ENCODE measurements at regions of chr13 and their contacts with region 1.

Region 1: GRCh38 chr13:26946684-26947343 is 186.2 kb upstream of the GPR12 start:
- DNase-seq: peak; percentile 42
- H3K4me3 ChIP-seq: no peak overlapping the region
- H3K27ac ChIP-seq: no peak overlapping the region
- H3K27me3 ChIP-seq: peaks cover 6% of the 10 kb centered on the region
- CTCF ChIP-seq: peak; percentile 90

Region 2: DNA sequence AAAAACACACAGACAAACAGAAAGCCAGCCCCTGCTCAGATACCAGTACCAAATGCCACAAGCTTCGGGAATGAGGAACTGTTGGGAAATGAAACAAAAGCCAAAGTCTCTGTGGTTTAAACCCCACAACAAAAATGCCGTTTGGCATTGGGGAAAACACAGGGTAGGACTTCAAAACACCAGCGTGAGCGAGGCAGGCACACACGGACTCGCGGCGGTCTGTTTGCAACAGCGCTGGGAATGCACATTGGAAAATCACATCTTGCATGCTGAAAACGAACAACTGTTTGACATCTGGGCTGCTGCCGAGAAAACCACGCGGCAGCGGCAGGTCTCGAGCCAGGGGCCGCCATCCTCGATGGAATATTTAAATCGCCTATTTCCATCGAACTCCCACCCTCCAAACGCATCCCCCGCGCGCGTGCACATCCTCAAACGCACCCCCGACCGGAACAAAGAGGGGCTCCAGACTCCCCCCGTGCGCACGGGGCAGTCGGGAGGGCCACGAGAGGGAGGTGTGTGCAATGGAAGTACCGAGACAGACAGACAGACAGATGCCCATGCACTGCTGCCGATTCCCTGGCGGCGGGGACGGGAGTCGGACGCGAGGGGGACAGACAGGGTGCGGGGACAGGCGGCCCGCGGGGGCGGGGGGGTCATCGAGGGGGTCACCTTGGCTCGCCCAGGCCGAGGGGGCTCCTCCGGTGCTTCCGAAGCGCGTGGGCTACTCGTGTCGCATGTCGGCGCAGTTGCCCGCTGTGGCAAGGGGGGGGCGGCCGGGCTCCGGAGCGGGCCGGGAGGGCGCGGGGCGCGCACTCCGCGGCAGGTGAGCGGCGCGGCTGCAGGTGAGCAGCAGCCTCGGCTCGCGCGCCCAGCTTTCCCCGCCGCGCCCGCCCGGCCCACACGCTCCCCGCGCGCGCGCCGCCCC is 186.6 kb before region 1 on chr13 and contains the start of gene GPR12:
- CTCF ChIA-PET with region 1: no interaction called
- POLR2A ChIA-PET with region 1: no interaction called
- DNase-seq: no peak
- H3K4me3 ChIP-seq: no peak within 1 kb of the TSS
- H3K27ac ChIP-seq: no peak within 1 kb of the TSS
- H3K27me3 ChIP-seq: peaks cover 33% of the 10 kb centered on the region
- CTCF ChIP-seq: no peak
- polyA plus RNA-seq, gene GPR12: not detected in 2 replicates

Region 3: DNA sequence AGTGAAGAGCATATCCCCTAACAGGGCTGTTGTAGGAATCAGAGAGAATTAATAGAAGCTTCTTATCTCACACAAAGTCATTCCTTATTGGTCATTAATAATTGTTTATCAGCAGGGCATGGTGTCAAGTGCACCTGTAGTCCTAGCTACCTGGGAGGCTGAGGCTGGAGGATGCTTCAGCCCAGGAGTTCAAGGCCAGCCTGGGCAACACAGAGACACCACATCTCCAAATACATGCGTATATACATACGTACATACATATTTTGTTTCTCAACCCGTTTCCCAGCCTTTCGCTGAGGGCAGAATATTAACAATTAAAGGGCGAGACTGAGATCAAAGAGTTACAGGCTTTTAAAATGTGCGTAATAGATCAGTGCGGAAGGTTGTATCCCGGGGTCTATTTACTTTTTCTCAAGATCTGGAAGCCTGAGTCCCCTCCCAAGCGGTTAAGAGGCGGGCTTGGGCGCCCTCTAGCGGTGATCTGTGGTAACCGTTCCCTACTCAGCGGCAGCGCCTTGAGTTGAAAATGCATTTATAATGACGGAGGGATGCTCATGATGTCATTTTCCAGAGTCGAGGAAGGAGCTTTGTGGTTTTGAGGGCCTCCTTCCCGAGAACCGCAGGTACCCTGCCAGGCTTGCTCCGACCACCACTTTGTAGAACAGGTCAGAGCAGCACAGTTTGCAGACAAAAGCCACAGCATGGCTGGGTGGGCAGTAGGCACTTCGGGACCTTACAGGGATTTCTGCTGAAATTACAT is 16.7 kb before region 1 on chr13:
- CTCF ChIA-PET with region 1: interaction called, 75 read pairs
- POLR2A ChIA-PET with region 1: no interaction called
- DNase-seq: peak; percentile 18
- H3K4me3 ChIP-seq: 0 out of 2 replicates have a peak overlapping the region, but pooled peaks have one; percentile 13
- H3K27ac ChIP-seq: no peak overlapping the region
- H3K27me3 ChIP-seq: peaks cover 14% of the 10 kb centered on the region
- CTCF ChIP-seq: peak; percentile 96

Region 4: DNA sequence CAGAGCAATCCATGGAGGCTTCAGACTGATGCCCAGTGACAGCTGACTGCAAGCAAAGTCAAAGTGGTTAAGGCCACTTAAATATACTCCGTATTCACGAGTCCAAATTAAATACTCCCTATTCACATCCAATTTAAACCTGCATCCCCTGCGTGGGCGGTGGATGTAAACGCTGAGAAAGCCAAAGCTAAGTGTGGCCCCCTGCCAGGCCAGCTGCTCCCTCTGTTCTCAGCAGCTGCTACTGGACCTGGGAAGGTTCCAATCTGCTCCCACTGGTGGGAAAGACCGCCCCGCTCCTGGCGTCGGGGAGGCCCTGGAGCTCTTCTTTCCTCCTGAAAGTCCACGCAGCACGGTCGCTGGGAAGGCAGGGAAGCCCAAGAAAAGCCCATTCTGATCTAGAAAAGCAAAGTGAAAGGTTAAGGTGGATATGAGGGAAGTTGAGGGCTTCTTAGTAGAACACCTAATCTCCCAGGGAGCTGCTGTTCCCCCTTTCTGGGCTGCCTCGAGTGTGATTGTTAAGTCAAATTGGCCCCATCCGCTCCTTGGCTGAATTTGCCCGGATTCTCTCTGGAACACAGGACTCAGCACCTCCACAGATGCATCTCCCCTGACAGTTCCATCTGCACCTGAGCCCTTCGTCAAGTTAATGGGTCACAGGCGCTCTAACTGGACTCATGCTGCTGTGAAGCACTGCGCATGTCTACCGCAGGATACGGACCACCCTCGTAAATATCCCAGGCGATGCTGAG is 19.3 kb after region 1 on chr13:
- CTCF ChIA-PET with region 1: interaction called, 18 read pairs
- POLR2A ChIA-PET with region 1: no interaction called
- DNase-seq: peak; percentile 92
- H3K4me3 ChIP-seq: no peak overlapping the region
- H3K27ac ChIP-seq: peak overlapping the region; percentile 31
- H3K27me3 ChIP-seq: peaks cover 10% of the 10 kb centered on the region
- CTCF ChIP-seq: no peak

Region 5: GRCh38 chr13:26977556-26977955 is 30.7 kb after region 1 on chr13:
- CTCF ChIA-PET with region 1: interaction called, 79 read pairs
- POLR2A ChIA-PET with region 1: interaction called, 6 read pairs
- DNase-seq: no peak
- H3K4me3 ChIP-seq: no peak overlapping the region
- H3K27ac ChIP-seq: no peak overlapping the region
- H3K27me3 ChIP-seq: no peaks in the 10 kb centered on the region
- CTCF ChIP-seq: no peak

Region 6: DNA sequence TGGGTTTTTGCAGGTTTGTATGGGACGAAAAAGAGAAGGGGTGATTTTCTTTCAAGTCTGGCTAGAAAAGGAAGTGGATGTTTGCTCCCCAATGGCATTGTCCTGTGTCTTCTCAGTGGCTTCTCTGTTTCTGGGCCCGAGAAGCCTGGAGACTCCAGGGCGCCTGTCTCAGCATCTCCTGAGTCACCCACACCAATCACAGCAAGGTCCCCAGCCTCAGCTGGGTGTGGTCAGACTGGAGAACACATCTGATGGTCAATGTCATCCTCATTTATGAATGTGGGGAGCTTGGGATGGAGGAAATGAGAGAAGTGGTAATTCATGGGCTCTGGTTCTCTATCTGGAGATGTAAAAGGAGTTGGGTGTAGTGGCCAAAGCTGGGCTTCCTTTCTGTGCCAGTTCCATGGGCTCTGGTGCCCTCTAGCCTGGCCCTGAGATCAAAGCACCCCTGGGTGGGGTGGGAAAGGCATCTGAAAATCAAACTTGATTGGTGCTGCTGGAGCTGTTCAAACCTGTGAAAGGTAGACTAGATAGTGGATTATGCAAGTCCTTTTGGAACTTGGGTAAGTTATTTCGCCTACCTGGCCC is 337.2 kb after region 1 on chr13:
- CTCF ChIA-PET with region 1: interaction called, 11 read pairs
- POLR2A ChIA-PET with region 1: no interaction called
- DNase-seq: no peak
- H3K4me3 ChIP-seq: no peak overlapping the region
- H3K27ac ChIP-seq: no peak overlapping the region
- H3K27me3 ChIP-seq: peaks cover 6% of the 10 kb centered on the region
- CTCF ChIP-seq: peak; percentile 39

Region 7: DNA sequence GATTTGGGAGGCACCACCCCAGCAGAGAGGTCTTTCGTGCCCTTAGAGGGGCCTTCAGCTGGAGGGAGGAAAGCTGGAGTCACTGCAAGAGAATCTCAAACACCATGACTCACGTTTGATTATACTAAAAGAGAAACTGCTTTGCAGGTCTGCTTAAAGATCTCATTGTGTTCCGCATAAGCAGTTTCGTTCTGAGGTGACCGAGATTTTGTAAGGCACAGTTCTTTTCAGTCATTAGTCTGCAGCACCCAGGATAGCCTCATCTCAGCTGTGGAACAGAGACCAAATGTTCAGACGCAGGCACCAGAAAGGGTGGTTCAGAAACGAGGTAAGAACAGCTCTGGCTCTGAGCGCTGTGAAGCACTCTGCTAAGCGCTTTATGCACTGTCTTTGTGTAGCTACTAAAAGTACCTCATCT is 406.4 kb after region 1 on chr13:
- CTCF ChIA-PET with region 1: interaction called, 216 read pairs
- POLR2A ChIA-PET with region 1: no interaction called
- DNase-seq: peak; percentile 29
- H3K4me3 ChIP-seq: peak overlapping the region; percentile 48
- H3K27ac ChIP-seq: peak overlapping the region; percentile 82
- H3K27me3 ChIP-seq: no peaks in the 10 kb centered on the region
- CTCF ChIP-seq: no peak

Region 8: GRCh38 chr13:27374650-27375049 is 427.8 kb after region 1 on chr13:
- CTCF ChIA-PET with region 1: interaction called, 11 read pairs
- POLR2A ChIA-PET with region 1: no interaction called
- DNase-seq: peak; percentile 59
- H3K4me3 ChIP-seq: no peak overlapping the region
- H3K27ac ChIP-seq: no peak overlapping the region
- H3K27me3 ChIP-seq: peaks cover 12% of the 10 kb centered on the region
- CTCF ChIP-seq: peak; percentile 85

Region 9: GRCh38 chr13:27442071-27442647 is 495.3 kb after region 1 on chr13:
- CTCF ChIA-PET with region 1: no interaction called
- POLR2A ChIA-PET with region 1: no interaction called
- DNase-seq: no peak
- H3K4me3 ChIP-seq: no peak overlapping the region
- H3K27ac ChIP-seq: no peak overlapping the region
- H3K27me3 ChIP-seq: no peaks in the 10 kb centered on the region
- CTCF ChIP-seq: no peak

Measured in AG04450 (cell line).